ENCODE measurements at regions of chr3 and their contacts with region 1.

Region 1: DNA sequence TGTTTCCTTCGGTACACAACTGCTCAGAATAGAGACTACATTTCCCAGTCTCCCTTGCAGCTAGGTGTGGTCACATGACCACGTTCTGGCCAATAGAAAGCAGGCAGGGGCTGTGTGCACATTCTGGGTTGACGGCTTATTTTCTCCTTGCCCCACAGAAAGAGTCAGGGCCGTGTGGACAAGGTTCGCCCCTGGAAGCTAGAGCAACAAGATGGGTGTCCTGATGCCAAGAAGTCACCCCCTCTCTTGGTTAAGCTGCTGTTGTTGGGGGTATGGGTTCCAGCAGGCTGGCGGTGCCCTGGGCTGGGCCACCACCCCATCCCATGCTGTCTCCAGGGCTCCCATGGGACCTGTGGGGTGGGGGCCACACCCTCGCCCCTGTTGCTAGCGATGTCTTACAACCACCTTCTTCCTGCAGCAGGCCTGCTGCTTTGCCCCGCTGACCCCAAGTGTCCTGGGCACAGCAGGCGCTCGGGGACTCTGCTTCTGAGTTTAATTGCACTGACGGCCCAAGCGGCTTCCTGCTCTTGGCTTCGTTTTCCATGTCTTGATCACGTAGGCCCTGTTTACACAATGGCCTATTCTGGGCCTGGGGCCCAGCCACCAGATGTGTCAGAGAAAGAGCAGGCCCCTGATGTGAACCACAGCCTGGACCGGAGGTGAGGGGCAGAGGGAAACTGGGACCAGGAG is 24.9 kb downstream of the ABTB1 start:
- DNase-seq: peak; percentile 92
- H3K4me3 ChIP-seq: no peak overlapping the region
- H3K27ac ChIP-seq: peak overlapping the region; percentile 91
- H3K4me1 ChIP-seq: peaks cover 19% of the 10 kb centered on the region
- H3K27me3 ChIP-seq: no peaks in the 10 kb centered on the region
- CTCF ChIP-seq: no peak
- POLR2A ChIP-seq: no peak

Region 2: DNA sequence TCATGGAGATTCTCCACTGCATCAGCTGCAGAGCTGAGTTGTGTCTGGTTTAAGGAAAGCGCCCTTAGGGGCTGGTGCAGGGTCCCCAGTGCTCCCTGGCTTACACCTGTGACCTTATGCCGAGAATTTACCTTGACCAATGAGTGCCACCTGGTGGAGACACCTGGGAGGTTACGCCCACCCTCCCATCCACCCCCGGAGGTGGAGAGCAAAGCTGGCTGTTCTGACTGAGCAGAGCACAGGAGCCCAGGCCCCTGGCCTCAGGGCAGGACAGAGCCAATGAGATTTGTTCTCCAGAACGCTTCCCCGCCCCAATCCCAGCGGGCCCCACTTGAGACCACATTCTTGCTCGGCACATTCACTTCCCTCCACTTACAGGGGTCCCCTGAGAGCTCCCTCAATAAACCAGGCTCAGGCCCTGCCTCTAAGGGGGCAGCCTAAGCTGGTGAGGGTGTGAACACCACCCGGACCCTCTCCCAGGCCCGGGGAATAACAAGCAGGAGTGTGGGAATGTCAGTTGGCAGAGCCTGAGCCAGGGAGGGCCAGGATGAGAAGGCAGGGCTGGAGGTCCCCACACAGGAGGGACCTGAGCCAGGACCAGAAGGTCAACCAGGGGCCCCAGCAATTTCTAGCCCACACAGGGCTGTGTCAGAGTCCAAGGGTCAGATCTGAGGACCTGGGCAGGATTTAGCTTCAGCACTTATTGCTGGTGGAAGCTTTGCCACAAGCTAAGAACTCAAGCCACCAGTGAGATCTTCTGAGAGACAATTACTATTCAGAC is 224.3 kb before region 1 on chr3:
- CTCF ChIA-PET with region 1: no interaction called
- POLR2A ChIA-PET with region 1: no interaction called
- dilution Hi-C with region 1: no loop called
- intact Hi-C with region 1: no loop called
- DNase-seq: no peak
- H3K4me3 ChIP-seq: no peak overlapping the region
- H3K27ac ChIP-seq: no peak overlapping the region
- H3K4me1 ChIP-seq: no peaks in the 10 kb centered on the region
- H3K27me3 ChIP-seq: no peaks in the 10 kb centered on the region
- CTCF ChIP-seq: peak in 1 of 2 donors; percentile 18
- POLR2A ChIP-seq: no peak

Region 3: DNA sequence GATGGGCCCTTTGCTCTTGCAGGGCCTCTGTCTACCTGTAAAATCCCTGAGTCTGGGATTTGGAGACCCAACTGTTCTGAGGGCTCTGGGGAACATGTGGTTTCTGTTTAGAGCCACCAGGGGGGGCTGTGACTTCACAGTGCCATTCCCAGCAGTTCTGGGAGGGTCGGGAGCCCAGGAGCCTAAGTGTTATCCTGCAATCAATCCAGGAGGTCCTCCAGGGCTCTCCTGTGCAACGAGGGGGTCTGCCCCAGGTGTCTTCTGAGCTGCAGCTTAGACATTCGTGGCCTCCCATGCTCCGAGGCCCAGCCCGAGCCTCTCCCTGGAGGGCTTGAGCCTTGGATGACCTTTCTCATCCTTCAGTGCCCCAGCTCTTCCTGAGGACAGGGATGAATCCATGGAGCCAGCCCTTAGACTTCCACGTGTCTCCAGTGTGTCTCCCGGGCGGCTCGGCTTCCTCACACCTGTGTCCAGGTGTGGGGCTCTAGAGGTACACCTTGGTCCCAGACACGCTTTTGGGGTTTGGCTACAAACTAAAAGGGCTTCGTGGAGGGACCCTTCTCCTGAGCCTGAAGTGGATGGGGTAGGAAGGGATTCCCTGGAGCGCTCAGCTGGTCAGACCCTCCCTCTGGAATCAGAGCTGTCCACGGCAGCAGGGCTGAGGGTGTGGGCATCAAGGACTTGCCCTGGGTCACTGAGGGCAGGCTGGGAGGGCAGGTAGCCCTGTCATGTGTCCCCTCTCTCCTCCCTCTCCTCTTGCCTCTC is 45.3 kb before region 1 on chr3:
- CTCF ChIA-PET with region 1: interaction called, 6 read pairs
- POLR2A ChIA-PET with region 1: no interaction called
- dilution Hi-C with region 1: no loop called
- intact Hi-C with region 1: loop called (anchors 2 kb)
- DNase-seq: peak; percentile 57
- H3K4me3 ChIP-seq: no peak overlapping the region
- H3K27ac ChIP-seq: no peak overlapping the region
- H3K4me1 ChIP-seq: no peaks in the 10 kb centered on the region
- H3K27me3 ChIP-seq: peaks cover 0 to 4% of the 10 kb centered on the region in 2 experiments
- CTCF ChIP-seq: peak; percentile 84 to 88
- POLR2A ChIP-seq: no peak

Region 4: GRCh38 chr3:127672516-127673190 is 25.0 kb before region 1 on chr3 and contains the start of gene ABTB1:
- CTCF ChIA-PET with region 1: no interaction called
- POLR2A ChIA-PET with region 1: no interaction called
- dilution Hi-C with region 1: no loop called
- intact Hi-C with region 1: no loop called
- DNase-seq: peak; percentile 25
- H3K4me3 ChIP-seq: peak within 1 kb of the TSS; percentile 55 to 73 (median 65)
- H3K27ac ChIP-seq: peak within 1 kb of the TSS; percentile 10
- H3K4me1 ChIP-seq: peaks cover 5% of the 10 kb centered on the region
- H3K27me3 ChIP-seq: no peaks in the 10 kb centered on the region
- CTCF ChIP-seq: no peak
- POLR2A ChIP-seq: peak; percentile 30
- total RNA-seq, gene ABTB1: 14.0 and 15.2 TPM in 2 replicates

Region 5: GRCh38 chr3:127684871-127685707 is 12.6 kb before region 1 on chr3:
- CTCF ChIA-PET with region 1: interaction called, 16 read pairs
- POLR2A ChIA-PET with region 1: interaction called, 3 read pairs
- dilution Hi-C with region 1: no loop called
- intact Hi-C with region 1: no loop called
- DNase-seq: no peak
- H3K4me3 ChIP-seq: no peak overlapping the region
- H3K27ac ChIP-seq: no peak overlapping the region
- H3K4me1 ChIP-seq: no peaks in the 10 kb centered on the region
- H3K27me3 ChIP-seq: no peaks in the 10 kb centered on the region
- CTCF ChIP-seq: no peak
- POLR2A ChIP-seq: no peak

Region 6: DNA sequence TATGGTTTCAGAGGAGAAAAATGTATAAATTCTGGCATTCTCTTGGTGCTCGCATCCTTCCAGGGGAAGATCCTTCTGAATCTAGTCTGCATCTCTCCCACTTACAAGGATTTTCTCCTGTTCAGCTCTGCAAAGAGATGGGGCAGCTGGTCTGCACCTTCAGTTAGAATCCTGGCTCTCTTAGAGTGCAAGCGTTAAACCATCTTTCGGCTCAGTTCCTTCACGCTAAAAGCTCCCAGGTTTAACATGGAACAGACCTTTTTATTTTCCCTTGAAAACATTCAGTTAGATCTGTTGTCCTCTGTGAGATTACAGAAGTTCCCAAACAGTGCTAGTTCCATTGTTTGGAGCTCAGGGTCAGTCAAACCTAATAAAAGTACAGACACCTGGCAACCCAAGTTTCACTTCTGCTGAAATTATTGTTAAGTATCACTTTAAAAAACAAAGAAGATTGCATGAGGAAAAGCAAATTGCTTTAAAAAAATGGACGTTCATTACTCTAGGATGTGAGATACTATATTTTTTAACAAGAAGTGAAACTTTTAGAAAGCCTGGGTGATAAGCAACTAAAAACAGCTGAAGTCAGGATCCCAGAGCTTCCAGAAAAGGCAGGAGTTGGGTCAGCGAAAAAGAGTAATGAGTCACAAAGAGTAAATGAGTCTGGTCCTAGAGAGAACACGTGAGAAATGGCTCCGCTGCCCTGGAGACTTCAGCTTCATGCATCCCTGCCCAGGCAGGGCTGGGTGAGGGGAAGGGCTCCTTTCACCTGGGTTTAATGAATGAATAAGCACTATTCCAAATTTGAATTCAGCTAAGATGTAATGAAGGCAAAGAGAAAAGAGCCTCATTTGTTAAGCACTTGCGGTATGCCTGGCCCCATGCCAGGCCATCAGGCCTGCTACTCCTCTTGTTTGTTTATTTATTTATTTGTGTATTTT is 38.3 kb after region 1 on chr3:
- CTCF ChIA-PET with region 1: interaction called, 6 read pairs
- POLR2A ChIA-PET with region 1: interaction called, 6 read pairs
- dilution Hi-C with region 1: no loop called
- intact Hi-C with region 1: loop called (anchors 1 kb)
- DNase-seq: peak; percentile 59
- H3K4me3 ChIP-seq: no peak overlapping the region
- H3K27ac ChIP-seq: peak overlapping the region; percentile 91
- H3K4me1 ChIP-seq: peaks cover 43% of the 10 kb centered on the region
- H3K27me3 ChIP-seq: no peaks in the 10 kb centered on the region
- CTCF ChIP-seq: no peak
- POLR2A ChIP-seq: no peak

Region 7: GRCh38 chr3:127800508-127800907 is 102.8 kb after region 1 on chr3:
- CTCF ChIA-PET with region 1: interaction called, 13 read pairs
- POLR2A ChIA-PET with region 1: interaction called, 3 read pairs
- dilution Hi-C with region 1: no loop called
- intact Hi-C with region 1: loop called (anchors 1 kb)
- DNase-seq: peak; percentile 89
- H3K4me3 ChIP-seq: no peak overlapping the region
- H3K27ac ChIP-seq: peak overlapping the region; percentile 100
- H3K4me1 ChIP-seq: peaks cover 62% of the 10 kb centered on the region
- H3K27me3 ChIP-seq: no peaks in the 10 kb centered on the region
- CTCF ChIP-seq: no peak
- POLR2A ChIP-seq: peak; percentile 36

Region 8: GRCh38 chr3:127831723-127832172 is 134.1 kb after region 1 on chr3:
- CTCF ChIA-PET with region 1: interaction called, 74 read pairs
- POLR2A ChIA-PET with region 1: no interaction called
- dilution Hi-C with region 1: no loop called
- intact Hi-C with region 1: loop called (anchors 1 kb)
- DNase-seq: peak; percentile 35
- H3K4me3 ChIP-seq: no peak overlapping the region
- H3K27ac ChIP-seq: no peak overlapping the region
- H3K4me1 ChIP-seq: no peaks in the 10 kb centered on the region
- H3K27me3 ChIP-seq: no peaks in the 10 kb centered on the region
- CTCF ChIP-seq: peak; percentile 73 to 82
- POLR2A ChIP-seq: no peak

Region 9: DNA sequence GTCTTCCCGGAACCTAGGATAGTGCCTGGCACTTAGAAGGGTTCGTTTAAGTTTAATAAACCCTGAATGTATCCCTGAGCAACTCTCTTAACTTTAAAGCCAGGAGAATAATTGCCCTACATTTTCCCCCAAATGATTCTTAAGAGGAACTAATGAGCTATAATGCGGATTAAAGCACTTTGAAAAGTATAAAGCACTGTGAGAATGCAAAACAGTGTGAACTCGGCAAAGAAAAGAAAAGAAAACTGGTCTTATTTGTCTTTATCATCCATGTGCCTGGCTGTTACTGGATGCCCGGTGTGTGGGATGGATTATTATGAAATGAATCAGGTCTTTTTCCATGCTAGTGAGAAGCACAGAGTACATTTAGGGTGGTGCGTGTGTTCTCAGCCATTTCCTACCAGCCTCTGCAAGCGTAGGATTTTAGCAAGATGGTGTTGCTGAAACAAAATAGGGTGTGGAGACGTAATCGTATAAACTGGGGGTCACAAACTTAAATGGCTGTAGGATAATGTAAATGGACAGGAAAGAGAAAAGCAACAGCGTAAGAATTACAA is 218.3 kb after region 1 on chr3:
- CTCF ChIA-PET with region 1: no interaction called
- POLR2A ChIA-PET with region 1: no interaction called
- dilution Hi-C with region 1: no loop called
- intact Hi-C with region 1: no loop called
- DNase-seq: no peak
- H3K4me3 ChIP-seq: no peak overlapping the region
- H3K27ac ChIP-seq: no peak overlapping the region
- H3K4me1 ChIP-seq: no peaks in the 10 kb centered on the region
- H3K27me3 ChIP-seq: peaks cover 38 to 50% of the 10 kb centered on the region in 2 experiments
- CTCF ChIP-seq: no peak
- POLR2A ChIP-seq: no peak

Region 10: DNA sequence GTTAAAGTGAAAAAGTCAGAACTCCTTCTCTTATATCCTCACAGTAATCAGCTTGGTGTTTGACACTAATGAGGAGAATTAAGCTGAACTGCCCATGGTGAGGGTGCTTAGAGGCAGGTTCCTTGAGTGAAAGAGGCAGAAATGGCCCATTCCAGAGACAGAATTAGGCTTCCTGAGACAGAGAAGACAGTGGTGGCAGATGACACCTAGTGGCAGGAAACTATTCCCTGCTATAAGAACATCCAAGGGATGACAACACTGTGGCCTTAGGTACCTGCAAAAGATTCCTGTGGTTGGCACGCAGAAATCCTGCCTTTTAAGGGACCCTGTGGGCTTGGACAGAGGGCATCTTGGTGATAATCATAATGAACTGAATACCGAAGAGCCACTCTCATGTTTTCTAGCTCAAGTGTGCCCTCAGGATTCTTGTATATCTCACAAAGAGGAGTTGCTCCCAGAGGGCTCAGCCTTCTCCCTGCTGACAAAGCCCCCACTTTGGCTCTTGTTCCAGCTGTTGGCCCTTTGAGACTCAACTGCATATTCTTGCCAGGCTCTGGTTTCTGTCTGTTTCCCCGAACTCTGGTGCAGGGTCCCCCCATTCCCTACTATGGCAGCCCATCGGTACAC is 273.4 kb after region 1 on chr3:
- CTCF ChIA-PET with region 1: interaction called, 3 read pairs
- POLR2A ChIA-PET with region 1: no interaction called
- dilution Hi-C with region 1: no loop called
- intact Hi-C with region 1: loop called (anchors 10 kb)
- DNase-seq: peak; percentile 27
- H3K4me3 ChIP-seq: no peak overlapping the region
- H3K27ac ChIP-seq: no peak overlapping the region
- H3K4me1 ChIP-seq: no peaks in the 10 kb centered on the region
- H3K27me3 ChIP-seq: peaks cover 37 to 77% of the 10 kb centered on the region in 2 experiments
- CTCF ChIP-seq: peak; percentile 35 to 53
- POLR2A ChIP-seq: no peak